Mammary epithelial cell (primary cell): ENCODE measurements at regions of chr12 and their contacts with region 1.

Region 1: DNA sequence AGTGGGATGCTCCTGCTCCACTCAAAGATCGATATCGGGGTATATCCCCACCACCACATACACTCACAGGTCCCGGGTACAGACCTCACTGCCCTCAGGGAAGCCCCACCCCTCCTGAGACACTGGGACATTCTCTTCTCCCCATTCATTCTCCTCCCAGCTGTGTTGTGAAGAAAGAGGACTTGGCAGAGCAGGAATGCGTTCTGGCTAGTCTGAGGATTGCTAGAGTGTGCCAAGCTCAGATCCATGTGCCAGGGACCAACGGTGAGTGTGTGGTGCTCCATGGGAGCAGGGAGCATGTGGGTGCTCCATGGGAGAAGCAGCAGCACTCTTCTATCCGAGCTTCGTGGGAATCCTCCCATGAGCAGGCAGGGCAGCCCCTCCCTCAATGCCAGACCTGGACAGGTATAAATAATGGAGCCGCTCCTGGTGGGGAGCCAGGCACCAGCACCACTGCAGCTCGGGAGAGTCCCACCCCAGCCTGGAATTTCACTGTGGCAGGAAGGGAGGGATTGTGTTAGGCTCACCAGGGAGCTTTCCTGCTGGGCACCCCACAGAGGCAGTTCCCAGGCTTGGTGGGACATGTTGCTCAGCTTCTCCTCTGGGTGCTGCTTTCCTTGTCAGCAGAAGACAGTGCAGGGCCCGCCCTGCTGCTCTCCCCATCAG is 2.3 kb upstream of the KRT5 start:
- DNase-seq: peak; percentile 97
- H3K4me3 ChIP-seq: peak overlapping the region; percentile 1 to 32 (median 16)
- H3K27ac ChIP-seq: peak overlapping the region; percentile 99
- H3K4me1 ChIP-seq: peaks cover 61% of the 10 kb centered on the region
- H3K27me3 ChIP-seq: no peaks in the 10 kb centered on the region
- CTCF ChIP-seq: no peak

Region 2: GRCh38 chr12:52139552-52140062 is 382.9 kb before region 1 on chr12:
- CTCF ChIA-PET with region 1: no interaction called
- dilution Hi-C with region 1: no loop called
- in situ Hi-C with region 1: loop called in 1 of 2 experiments (anchors 10 kb)
- intact Hi-C with region 1: no loop called
- DNase-seq: peak; percentile 53
- H3K4me3 ChIP-seq: no peak overlapping the region
- H3K27ac ChIP-seq: no peak overlapping the region
- H3K4me1 ChIP-seq: peaks cover 15% of the 10 kb centered on the region
- H3K27me3 ChIP-seq: no peaks in the 10 kb centered on the region
- CTCF ChIP-seq: peak; percentile 98

Region 3: GRCh38 chr12:52230327-52231291 is 291.9 kb before region 1 on chr12:
- CTCF ChIA-PET with region 1: no interaction called
- dilution Hi-C with region 1: no loop called
- in situ Hi-C with region 1: no loop called
- intact Hi-C with region 1: loop called (anchors 5 kb)
- DNase-seq: peak; percentile 75
- H3K4me3 ChIP-seq: peak overlapping the region in 1 of 3 experiments; percentile 5
- H3K27ac ChIP-seq: peak overlapping the region; percentile 79
- H3K4me1 ChIP-seq: peaks cover 57% of the 10 kb centered on the region
- H3K27me3 ChIP-seq: no peaks in the 10 kb centered on the region
- CTCF ChIP-seq: no peak

Region 4: GRCh38 chr12:52442600-52443061 is 79.8 kb before region 1 on chr12:
- CTCF ChIA-PET with region 1: interaction called, 4 read pairs
- dilution Hi-C with region 1: loop called (anchors 5 kb)
- in situ Hi-C with region 1: loop called in 1 of 2 experiments (anchors 5 kb)
- intact Hi-C with region 1: loop called (anchors 1 kb)
- DNase-seq: peak; percentile 98
- H3K4me3 ChIP-seq: no peak overlapping the region
- H3K27ac ChIP-seq: peak overlapping the region; percentile 98
- H3K4me1 ChIP-seq: peaks cover 67% of the 10 kb centered on the region
- H3K27me3 ChIP-seq: no peaks in the 10 kb centered on the region
- CTCF ChIP-seq: peak; percentile 37 to 60

Region 5: DNA sequence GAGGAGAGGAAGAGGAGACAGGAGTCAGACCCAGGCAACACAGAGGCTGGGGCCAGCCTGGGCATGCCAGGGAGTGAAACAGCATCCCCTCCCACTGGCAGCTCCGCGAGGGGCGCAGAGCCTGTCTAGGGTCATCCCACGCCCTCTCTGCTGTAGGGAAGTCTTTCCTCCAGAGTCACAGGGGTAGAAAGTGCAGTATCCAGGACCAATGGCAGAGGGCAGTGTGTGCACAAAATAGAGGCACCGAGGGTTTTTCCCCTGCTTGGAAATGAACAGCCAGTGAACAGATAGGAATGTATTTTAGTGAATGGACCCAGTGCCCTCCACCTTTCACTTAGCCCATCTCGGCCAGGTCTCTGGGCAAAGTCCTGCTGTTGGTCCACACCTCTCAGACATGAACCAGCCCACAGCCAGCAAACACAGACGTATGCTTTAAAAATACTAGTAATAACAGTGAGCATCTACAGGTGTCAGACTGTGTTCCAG is 60.5 kb after region 1 on chr12:
- CTCF ChIA-PET with region 1: no interaction called
- dilution Hi-C with region 1: loop called (anchors 5 kb)
- in situ Hi-C with region 1: loop called in 1 of 2 experiments (anchors 5 kb)
- intact Hi-C with region 1: loop called (anchors 1 kb)
- DNase-seq: peak; percentile 87
- H3K4me3 ChIP-seq: no peak overlapping the region
- H3K27ac ChIP-seq: peak overlapping the region; percentile 68
- H3K4me1 ChIP-seq: peaks cover 53% of the 10 kb centered on the region
- H3K27me3 ChIP-seq: no peaks in the 10 kb centered on the region
- CTCF ChIP-seq: peak; percentile 75 to 88

Region 6: GRCh38 chr12:52870351-52871290 is 348.1 kb after region 1 on chr12:
- CTCF ChIA-PET with region 1: no interaction called
- dilution Hi-C with region 1: no loop called
- in situ Hi-C with region 1: loop called in 1 of 2 experiments (anchors 5 kb)
- intact Hi-C with region 1: loop called (anchors 1 kb)
- DNase-seq: peak; percentile 52
- H3K4me3 ChIP-seq: no peak overlapping the region
- H3K27ac ChIP-seq: peak overlapping the region; percentile 67
- H3K4me1 ChIP-seq: peaks cover 59% of the 10 kb centered on the region
- H3K27me3 ChIP-seq: no peaks in the 10 kb centered on the region
- CTCF ChIP-seq: peak; percentile 57 to 74